Vagina (tissue), 2 donors: ENCODE measurements at regions of chr4 and their contacts with region 1.

Region 1: DNA sequence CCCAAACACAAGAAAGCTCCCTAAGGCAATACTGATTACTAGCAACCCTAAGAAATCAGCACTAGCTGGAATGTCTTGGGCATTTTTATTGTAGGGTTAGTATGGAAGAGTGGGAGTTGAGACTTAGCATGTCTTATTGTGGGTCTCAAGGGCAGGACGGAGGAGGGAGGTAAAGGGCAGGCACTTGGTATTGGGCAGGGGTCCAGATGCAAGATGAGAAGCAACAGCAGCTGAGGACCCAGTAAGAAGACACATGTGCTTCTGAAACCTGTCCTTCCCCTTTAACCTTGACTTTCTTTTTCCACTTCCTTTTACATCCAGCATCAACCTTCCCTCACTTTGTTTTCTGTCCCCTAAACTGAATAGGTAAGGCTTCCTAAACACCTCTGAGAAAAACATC is 37.4 kb downstream of the LARP7 start:
- DNase-seq: no peak
- H3K4me3 ChIP-seq: no peak overlapping the region
- H3K27ac ChIP-seq: no peak overlapping the region
- H3K4me1 ChIP-seq: no peaks in the 10 kb centered on the region
- H3K27me3 ChIP-seq: no peaks in the 10 kb centered on the region
- CTCF ChIP-seq: no peak
- POLR2A ChIP-seq: no peak

Region 2: GRCh38 chr4:112532267-112532666 is 142.1 kb before region 1 on chr4:
- intact Hi-C with region 1: no loop called
- DNase-seq: no peak
- H3K4me3 ChIP-seq: no peak overlapping the region
- H3K27ac ChIP-seq: no peak overlapping the region
- H3K4me1 ChIP-seq: no peaks in the 10 kb centered on the region
- H3K27me3 ChIP-seq: no peaks in the 10 kb centered on the region
- CTCF ChIP-seq: no peak
- POLR2A ChIP-seq: no peak

Region 3: GRCh38 chr4:112546476-112546875 is 127.9 kb before region 1 on chr4:
- intact Hi-C with region 1: no loop called
- DNase-seq: no peak
- H3K4me3 ChIP-seq: no peak overlapping the region
- H3K27ac ChIP-seq: no peak overlapping the region
- H3K4me1 ChIP-seq: no peaks in the 10 kb centered on the region
- H3K27me3 ChIP-seq: no peaks in the 10 kb centered on the region
- CTCF ChIP-seq: no peak
- POLR2A ChIP-seq: no peak

Region 4: DNA sequence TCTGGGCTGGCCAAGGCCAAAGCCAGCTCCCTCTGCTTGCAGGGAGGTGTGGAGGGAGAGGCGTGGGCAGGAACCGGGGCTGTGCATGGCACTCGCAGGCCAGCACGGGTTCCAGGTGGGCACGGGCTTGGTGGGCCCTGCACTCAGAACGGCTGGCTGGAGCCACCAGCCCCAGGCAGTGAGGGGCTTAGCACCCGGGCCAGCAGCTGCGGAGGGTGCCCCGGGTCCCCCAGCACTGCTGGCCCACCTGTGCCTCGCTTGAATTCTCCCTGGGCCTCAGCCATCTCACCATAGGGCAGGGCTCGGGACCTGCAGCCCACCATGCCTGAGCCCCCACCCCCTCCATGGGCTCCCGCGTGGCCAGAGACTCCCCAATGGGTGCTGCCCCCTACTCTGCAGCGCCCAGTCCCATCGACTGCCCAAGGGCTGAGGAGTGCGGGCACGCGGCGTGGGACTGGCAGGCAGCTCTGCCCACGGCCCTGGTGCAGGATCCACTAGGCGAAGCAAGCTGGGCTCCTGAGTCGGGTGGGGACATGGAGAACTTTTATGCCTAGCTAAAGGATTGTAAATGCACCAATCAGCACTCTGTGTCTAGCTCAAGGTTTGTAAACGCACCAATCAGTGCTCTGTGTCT is 156.5 kb after region 1 on chr4:
- intact Hi-C with region 1: no loop called
- DNase-seq: no peak
- H3K4me3 ChIP-seq: no peak overlapping the region
- H3K27ac ChIP-seq: no peak overlapping the region
- H3K4me1 ChIP-seq: no peaks in the 10 kb centered on the region
- H3K27me3 ChIP-seq: no peaks in the 10 kb centered on the region
- CTCF ChIP-seq: no peak
- POLR2A ChIP-seq: no peak

Region 5: GRCh38 chr4:113801882-113802281 is 1127.5 kb after region 1 on chr4:
- intact Hi-C with region 1: loop called (anchors 5 kb)
- DNase-seq: no peak
- H3K4me3 ChIP-seq: no peak overlapping the region
- H3K27ac ChIP-seq: no peak overlapping the region
- H3K4me1 ChIP-seq: no peaks in the 10 kb centered on the region
- H3K27me3 ChIP-seq: no peaks in the 10 kb centered on the region
- CTCF ChIP-seq: no peak
- POLR2A ChIP-seq: no peak